ENCODE measurements at regions of chr22 and their contacts with region 1.

Region 1: DNA sequence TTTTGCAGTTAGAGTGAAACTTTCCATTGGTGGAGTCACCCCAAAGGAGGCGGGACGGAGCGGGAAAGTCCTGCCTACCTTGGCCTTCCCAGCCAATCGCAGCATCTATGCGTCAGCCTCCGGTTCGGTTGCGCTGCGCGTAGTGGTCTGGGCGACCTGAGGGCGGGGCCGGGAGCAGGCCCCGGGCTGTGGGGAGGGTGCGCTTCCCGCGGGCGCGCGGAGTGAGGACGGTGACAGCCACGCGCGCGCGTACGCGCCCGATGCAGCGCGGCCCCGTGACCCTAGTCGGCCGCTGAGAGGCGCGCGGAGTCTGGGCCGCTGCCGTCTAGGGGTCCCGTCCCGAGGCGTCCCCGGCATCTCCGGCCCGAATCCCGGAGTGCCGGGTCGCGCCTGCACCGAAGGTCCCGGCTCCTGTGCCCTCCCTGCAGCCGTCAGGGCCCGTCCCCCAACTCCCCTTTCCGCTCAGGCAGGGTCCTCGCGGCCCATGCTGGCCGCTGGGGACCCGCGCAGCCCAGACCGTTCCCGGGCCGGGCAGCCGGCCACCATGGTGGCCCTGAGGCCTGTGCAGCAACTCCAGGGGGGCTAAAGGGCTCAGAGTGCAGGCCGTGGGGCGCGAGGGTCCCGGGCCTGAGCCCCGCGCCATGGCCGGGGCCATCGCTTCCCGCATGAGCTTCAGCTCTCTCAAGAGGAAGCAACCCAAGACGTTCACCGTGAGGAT is at the start of gene NF2:
- DNase-seq: peak; percentile 99
- ATAC-seq: peak; percentile 97
- H3K4me3 ChIP-seq: peak within 1 kb of the TSS; percentile 82 to 99 (median 95)
- H3K4me3 Mint-ChIP-seq: peak within 1 kb of the TSS; percentile 98
- H3K27ac ChIP-seq: peak within 1 kb of the TSS; percentile 81 to 92
- H3K27ac Mint-ChIP-seq: peak within 1 kb of the TSS; percentile 97
- H3K4me1 ChIP-seq: peaks cover 9 to 15% of the 10 kb centered on the region in 2 donors
- H3K4me1 Mint-ChIP-seq: peaks cover 20% of the 10 kb centered on the region
- H3K27me3 ChIP-seq: no peaks in the 10 kb centered on the region
- H3K27me3 Mint-ChIP-seq: no peaks in the 10 kb centered on the region
- CTCF ChIP-seq: no peak
- total RNA-seq, gene NF2: 26.6 and 27.7 TPM in 2 replicates

Region 2: DNA sequence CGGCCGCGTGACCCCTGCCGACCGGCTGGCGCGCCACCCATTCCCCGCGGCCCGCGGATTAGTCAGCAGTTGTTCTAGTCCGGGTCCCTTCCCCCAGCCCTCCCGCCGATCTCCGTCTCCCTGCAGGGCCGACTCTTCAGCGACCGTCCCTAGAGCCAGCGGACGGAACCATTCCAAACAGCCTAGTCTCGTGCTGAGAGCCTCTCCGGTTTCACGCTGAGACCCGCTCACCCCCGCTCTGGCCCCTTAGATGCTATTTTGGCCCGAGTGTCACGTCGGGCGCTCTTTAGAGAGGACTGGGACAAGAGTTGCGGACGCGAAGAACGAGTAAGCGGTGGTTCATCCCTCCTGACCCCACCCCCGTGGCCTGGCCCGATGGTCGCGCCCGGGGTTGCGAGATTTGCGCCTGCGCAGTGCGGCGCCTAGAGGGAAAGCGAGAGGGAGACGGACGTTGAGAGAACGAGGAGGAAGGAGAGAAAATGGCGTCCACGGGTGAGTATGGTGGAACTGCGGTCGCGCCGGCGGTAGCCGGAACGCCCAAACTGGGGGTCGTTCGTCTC is 335.6 kb before region 1 on chr22 and contains the starts of genes EWSR1 and RHBDD3:
- CTCF ChIA-PET with region 1: no interaction called
- POLR2A ChIA-PET with region 1: no interaction called
- intact Hi-C with region 1: loop called (anchors 5 kb)
- DNase-seq: peak; percentile 99
- ATAC-seq: peak; percentile 86
- H3K4me3 ChIP-seq: peak within 1 kb of the TSS; percentile 61 to 96 (median 80)
- H3K4me3 Mint-ChIP-seq: peak within 1 kb of the TSS; percentile 93
- H3K27ac ChIP-seq: peak within 1 kb of the TSS; percentile 98 to 99
- H3K27ac Mint-ChIP-seq: peak within 1 kb of the TSS; percentile 96
- H3K4me1 ChIP-seq: peaks cover 42 to 47% of the 10 kb centered on the region in 2 donors
- H3K4me1 Mint-ChIP-seq: peaks cover 50% of the 10 kb centered on the region
- H3K27me3 ChIP-seq: no peaks in the 10 kb centered on the region
- H3K27me3 Mint-ChIP-seq: no peaks in the 10 kb centered on the region
- CTCF ChIP-seq: no peak
- total RNA-seq, gene EWSR1: 289 and 295 TPM in 2 replicates
- total RNA-seq, gene RHBDD3: 11.4 and 11.9 TPM in 2 replicates

Region 3: DNA sequence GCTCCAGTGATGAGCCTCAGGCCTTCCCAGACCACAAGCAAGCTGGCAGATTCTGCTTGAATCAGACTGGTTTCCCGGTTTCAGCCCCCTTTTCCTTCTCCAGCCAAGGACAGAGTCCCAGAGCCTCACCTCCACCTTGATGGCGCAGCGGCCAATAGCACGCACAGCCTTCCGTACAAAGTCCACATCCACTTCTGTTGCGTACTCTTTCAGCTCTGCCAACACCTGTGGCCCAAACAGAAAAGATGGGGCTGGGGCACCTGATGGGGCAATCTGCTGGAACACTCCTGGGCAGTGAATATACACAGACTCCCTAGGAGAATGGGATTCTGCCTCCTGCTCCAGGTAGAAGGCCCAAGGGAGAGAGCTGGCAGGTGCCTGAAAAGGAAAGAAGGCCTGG is 252.5 kb before region 1 on chr22:
- CTCF ChIA-PET with region 1: no interaction called
- POLR2A ChIA-PET with region 1: no interaction called
- intact Hi-C with region 1: no loop called
- DNase-seq: no peak
- ATAC-seq: no peak
- H3K4me3 ChIP-seq: no peak overlapping the region
- H3K4me3 Mint-ChIP-seq: no peak overlapping the region
- H3K27ac ChIP-seq: no peak overlapping the region
- H3K27ac Mint-ChIP-seq: no peak overlapping the region
- H3K4me1 ChIP-seq: no peaks in the 10 kb centered on the region
- H3K4me1 Mint-ChIP-seq: no peaks in the 10 kb centered on the region
- H3K27me3 ChIP-seq: no peaks in the 10 kb centered on the region
- H3K27me3 Mint-ChIP-seq: no peaks in the 10 kb centered on the region
- CTCF ChIP-seq: no peak

Region 4: DNA sequence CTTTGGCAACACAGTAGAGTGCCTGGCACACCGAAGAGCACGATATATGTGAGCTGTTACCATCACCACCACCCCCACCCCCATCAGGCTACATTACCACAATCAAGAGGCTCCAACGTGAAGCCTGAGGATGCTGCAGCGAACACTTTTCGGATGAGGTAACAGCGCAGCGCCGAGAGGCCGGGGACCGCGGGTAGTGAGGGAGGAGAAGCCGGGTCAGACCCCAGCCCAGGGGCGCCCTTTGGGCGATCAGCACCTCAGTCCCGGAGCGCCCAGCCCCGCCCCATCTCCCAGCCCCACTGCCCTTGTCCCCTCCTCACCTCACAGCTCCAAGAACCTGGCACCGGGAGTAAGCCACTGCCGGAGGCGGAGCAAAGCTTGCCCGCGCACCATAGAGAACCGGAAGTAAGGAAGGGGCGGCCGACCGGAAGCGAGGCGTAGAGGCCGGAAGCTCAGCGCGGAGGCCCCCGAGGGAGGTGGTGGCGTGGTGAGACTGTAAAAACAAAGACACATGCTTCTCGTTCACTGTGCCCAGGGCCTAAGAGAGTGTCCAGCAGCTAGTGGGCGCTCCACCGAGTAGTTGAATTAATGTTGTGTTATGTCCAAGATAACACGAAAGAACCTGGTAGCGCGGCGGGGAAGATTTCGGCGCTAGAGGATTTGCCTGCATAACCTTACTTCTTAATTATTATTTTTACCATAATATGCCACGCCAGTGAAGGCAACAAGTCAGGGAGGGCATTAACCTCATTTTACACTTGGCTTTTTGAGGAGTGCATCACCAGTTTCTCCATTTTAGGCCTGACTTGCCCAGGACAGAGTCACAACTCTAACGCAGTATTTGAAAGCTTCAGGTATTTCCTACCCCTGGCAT is 49.9 kb before region 1 on chr22 and contains the start of gene THOC5:
- CTCF ChIA-PET with region 1: interaction called, 3 read pairs
- POLR2A ChIA-PET with region 1: interaction called, 3 read pairs
- intact Hi-C with region 1: loop called (anchors 1 kb)
- DNase-seq: peak; percentile 89
- ATAC-seq: peak; percentile 93
- H3K4me3 ChIP-seq: peak within 1 kb of the TSS; percentile 80 to 93 (median 92)
- H3K4me3 Mint-ChIP-seq: peak within 1 kb of the TSS; percentile 89
- H3K27ac ChIP-seq: peak within 1 kb of the TSS; percentile 66 to 79
- H3K27ac Mint-ChIP-seq: peak within 1 kb of the TSS; percentile 96
- H3K4me1 ChIP-seq: peaks cover 7 to 15% of the 10 kb centered on the region in 2 donors
- H3K4me1 Mint-ChIP-seq: peaks cover 23% of the 10 kb centered on the region
- H3K27me3 ChIP-seq: no peaks in the 10 kb centered on the region
- H3K27me3 Mint-ChIP-seq: no peaks in the 10 kb centered on the region
- CTCF ChIP-seq: no peak
- total RNA-seq, gene THOC5: 59.1 and 66.2 TPM in 2 replicates

Region 5: GRCh38 chr22:29563652-29564460 is 39.7 kb before region 1 on chr22:
- CTCF ChIA-PET with region 1: no interaction called
- POLR2A ChIA-PET with region 1: no interaction called
- intact Hi-C with region 1: no loop called
- DNase-seq: no peak
- ATAC-seq: no peak
- H3K4me3 ChIP-seq: no peak overlapping the region
- H3K4me3 Mint-ChIP-seq: no peak overlapping the region
- H3K27ac ChIP-seq: no peak overlapping the region
- H3K27ac Mint-ChIP-seq: no peak overlapping the region
- H3K4me1 ChIP-seq: no peaks in the 10 kb centered on the region
- H3K4me1 Mint-ChIP-seq: no peaks in the 10 kb centered on the region
- H3K27me3 ChIP-seq: no peaks in the 10 kb centered on the region
- H3K27me3 Mint-ChIP-seq: no peaks in the 10 kb centered on the region
- CTCF ChIP-seq: no peak

Region 6: DNA sequence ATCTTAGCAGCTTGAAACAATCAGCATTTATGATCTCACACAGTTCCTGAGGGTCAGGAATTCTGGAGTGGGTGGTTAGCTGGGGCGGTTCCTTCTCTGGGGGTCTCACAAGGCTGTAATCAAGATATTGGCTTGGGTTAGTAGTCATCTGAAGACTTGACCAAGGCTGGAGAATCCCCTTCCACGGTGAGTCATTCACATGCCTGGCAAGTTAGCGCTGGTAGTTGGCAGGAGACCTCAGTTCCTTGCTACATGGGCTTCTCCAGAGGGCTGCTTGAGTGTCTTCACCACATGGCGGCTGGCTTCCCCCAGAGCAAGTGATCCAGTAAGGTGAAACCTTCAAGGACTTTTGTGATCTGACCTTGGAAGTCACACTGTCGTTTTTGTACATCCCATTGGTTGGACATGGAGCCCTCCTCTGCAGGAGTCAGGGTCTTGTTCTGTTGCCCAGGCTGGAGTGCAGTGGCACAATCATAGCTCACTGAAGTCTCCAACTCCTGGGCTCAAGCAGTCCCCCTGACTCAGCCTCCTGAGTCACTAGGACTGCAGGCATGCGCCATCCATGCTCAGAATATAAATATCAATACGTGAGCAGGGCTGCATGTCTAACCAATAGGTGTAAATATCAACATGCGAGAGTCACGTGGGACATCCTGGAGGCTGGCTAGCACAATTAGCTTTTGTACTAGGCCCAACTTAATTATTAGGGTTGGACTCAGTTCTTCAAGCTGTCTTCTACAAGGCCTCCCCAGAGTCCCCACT is 15.4 kb before region 1 on chr22:
- CTCF ChIA-PET with region 1: interaction called, 24 read pairs
- POLR2A ChIA-PET with region 1: no interaction called
- intact Hi-C with region 1: loop called (anchors 1 kb)
- DNase-seq: no peak
- ATAC-seq: no peak
- H3K4me3 ChIP-seq: no peak overlapping the region
- H3K4me3 Mint-ChIP-seq: no peak overlapping the region
- H3K27ac ChIP-seq: no peak overlapping the region
- H3K27ac Mint-ChIP-seq: no peak overlapping the region
- H3K4me1 ChIP-seq: peaks cover 0 to 3% of the 10 kb centered on the region in 2 donors
- H3K4me1 Mint-ChIP-seq: peaks cover 4% of the 10 kb centered on the region
- H3K27me3 ChIP-seq: no peaks in the 10 kb centered on the region
- H3K27me3 Mint-ChIP-seq: no peaks in the 10 kb centered on the region
- CTCF ChIP-seq: no peak

Region 7: GRCh38 chr22:29820961-29821789 is 217.7 kb after region 1 on chr22:
- CTCF ChIA-PET with region 1: no interaction called
- POLR2A ChIA-PET with region 1: no interaction called
- intact Hi-C with region 1: no loop called
- DNase-seq: no peak
- ATAC-seq: no peak
- H3K4me3 ChIP-seq: no peak overlapping the region
- H3K4me3 Mint-ChIP-seq: no peak overlapping the region
- H3K27ac ChIP-seq: no peak overlapping the region
- H3K27ac Mint-ChIP-seq: no peak overlapping the region
- H3K4me1 ChIP-seq: no peaks in the 10 kb centered on the region
- H3K4me1 Mint-ChIP-seq: no peaks in the 10 kb centered on the region
- H3K27me3 ChIP-seq: no peaks in the 10 kb centered on the region
- H3K27me3 Mint-ChIP-seq: no peaks in the 10 kb centered on the region
- CTCF ChIP-seq: no peak

Region 8: DNA sequence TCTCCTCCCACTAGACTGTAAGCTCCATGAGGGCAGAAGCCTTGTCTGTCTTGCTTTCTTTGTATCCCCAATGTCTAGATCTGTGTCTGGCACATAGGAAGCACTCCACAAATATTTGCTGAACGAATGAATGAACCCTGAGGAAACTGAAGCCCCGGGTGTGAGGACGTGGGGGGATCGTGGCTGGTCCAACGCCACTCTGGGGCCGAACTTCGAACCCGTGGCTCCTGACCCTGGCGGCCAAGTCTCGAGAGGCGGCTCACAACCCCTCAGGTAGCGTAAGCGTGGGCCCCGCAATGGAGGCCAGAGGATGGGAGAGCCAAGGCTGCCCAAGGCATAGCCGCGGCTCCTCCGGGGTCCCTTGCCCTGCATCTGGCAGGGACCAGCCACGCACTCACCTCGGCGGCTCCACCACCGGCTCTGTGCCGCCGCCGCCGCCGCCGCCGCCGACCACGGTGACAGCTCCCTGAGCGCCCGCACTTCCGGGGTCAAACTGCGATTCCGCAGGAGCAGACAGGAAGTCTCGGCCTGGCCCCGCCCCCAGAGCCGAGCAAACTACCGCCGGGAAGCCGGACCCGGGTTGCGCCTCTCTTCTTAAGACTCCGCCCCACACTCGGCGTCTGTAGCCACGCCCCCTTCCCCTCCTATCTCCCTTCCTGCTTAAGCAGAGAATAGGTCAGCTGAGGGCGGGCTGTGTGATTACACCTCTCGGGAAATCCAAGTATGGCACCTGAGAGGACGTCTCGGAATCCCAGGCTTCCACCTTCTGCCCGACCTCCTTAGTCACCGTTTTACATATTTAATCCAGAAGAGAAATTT is 234.5 kb after region 1 on chr22 and contains the start of gene ASCC2:
- CTCF ChIA-PET with region 1: no interaction called
- POLR2A ChIA-PET with region 1: no interaction called
- intact Hi-C with region 1: loop called (anchors 1 kb)
- DNase-seq: peak; percentile 99
- ATAC-seq: peak; percentile 100
- H3K4me3 ChIP-seq: peak within 1 kb of the TSS; percentile 75 to 96 (median 91)
- H3K4me3 Mint-ChIP-seq: peak within 1 kb of the TSS; percentile 93
- H3K27ac ChIP-seq: peak within 1 kb of the TSS; percentile 80 to 91
- H3K27ac Mint-ChIP-seq: peak within 1 kb of the TSS; percentile 96
- H3K4me1 ChIP-seq: peaks cover 15 to 19% of the 10 kb centered on the region in 2 donors
- H3K4me1 Mint-ChIP-seq: peaks cover 26% of the 10 kb centered on the region
- H3K27me3 ChIP-seq: no peaks in the 10 kb centered on the region
- H3K27me3 Mint-ChIP-seq: peaks cover 4% of the 10 kb centered on the region
- CTCF ChIP-seq: no peak
- total RNA-seq, gene ASCC2: 84.0 and 87.2 TPM in 2 replicates

Region 9: GRCh38 chr22:29848111-29848510 is 244.6 kb after region 1 on chr22:
- CTCF ChIA-PET with region 1: no interaction called
- POLR2A ChIA-PET with region 1: no interaction called
- intact Hi-C with region 1: no loop called
- DNase-seq: no peak
- ATAC-seq: no peak
- H3K4me3 ChIP-seq: no peak overlapping the region
- H3K4me3 Mint-ChIP-seq: no peak overlapping the region
- H3K27ac ChIP-seq: no peak overlapping the region
- H3K27ac Mint-ChIP-seq: no peak overlapping the region
- H3K4me1 ChIP-seq: no peaks in the 10 kb centered on the region
- H3K4me1 Mint-ChIP-seq: no peaks in the 10 kb centered on the region
- H3K27me3 ChIP-seq: no peaks in the 10 kb centered on the region
- H3K27me3 Mint-ChIP-seq: peaks cover 5% of the 10 kb centered on the region
- CTCF ChIP-seq: no peak

Region 10: DNA sequence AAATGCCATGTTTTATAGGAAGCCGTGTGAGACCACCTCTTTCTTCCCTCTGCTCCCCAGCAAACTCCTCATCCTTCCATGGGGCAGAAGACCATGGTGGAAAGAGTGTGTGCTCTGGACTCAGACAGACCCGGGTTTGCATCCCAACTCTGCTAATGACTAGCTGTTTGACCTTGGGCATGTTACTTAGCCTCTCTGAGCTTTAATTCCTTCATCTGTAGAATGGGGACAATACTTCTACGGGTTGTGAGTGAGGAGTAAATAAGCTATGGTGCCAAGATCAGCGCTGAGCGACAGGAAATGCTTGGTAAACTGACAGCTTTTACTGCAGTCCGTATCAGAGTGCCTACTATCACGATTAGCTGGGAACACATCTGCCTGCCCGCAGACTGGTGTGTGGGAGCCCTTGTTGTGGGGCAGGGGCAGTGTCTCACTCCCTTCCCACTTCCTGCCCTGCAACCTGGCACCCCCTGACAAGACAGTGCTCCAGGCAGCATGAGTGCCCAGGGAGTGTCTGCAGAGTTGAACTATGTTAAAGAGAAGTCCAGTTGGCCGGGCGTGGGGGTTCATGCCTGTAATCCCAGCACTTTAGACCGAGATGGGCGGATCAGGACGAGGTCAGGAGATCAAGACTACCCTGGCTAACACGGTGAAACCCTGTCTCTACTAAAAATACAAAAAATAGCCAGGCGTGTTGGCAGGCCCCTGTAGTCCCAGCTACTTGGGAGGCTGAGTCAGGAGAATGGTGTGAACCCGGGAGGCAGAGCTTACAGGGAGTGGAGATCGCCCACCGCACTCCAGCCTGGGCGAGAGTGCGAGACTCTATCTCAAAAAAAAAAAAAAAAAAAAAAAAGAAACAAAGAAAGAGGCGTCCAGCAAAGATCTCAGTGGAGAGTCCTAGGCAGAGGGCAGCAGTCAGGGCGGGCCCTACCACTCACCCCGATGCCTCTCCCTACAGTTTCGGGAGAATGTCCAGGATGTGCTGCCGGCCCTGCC is 795.5 kb after region 1 on chr22:
- CTCF ChIA-PET with region 1: no interaction called
- POLR2A ChIA-PET with region 1: interaction called, 13 read pairs
- intact Hi-C with region 1: no loop called
- DNase-seq: no peak
- ATAC-seq: no peak
- H3K4me3 ChIP-seq: no peak overlapping the region
- H3K4me3 Mint-ChIP-seq: peak overlapping the region; percentile 24
- H3K27ac ChIP-seq: no peak overlapping the region
- H3K27ac Mint-ChIP-seq: peak overlapping the region; percentile 43
- H3K4me1 ChIP-seq: peaks cover 17 to 22% of the 10 kb centered on the region in 2 donors
- H3K4me1 Mint-ChIP-seq: peaks cover 10% of the 10 kb centered on the region
- H3K27me3 ChIP-seq: peaks cover 0 to 40% (median 26%) of the 10 kb centered on the region in 4 experiments
- H3K27me3 Mint-ChIP-seq: peaks cover 39% of the 10 kb centered on the region
- CTCF ChIP-seq: no peak

Measured in B cell (primary cell).